ENCODE measurements at regions of chr19 and their contacts with region 1.

Region 1: GRCh38 chr19:6126335-6126974 is 9.0 kb upstream of the ACSBG2 start:
- DNase-seq: no peak
- H3K4me3 ChIP-seq: no peak overlapping the region
- H3K27ac ChIP-seq: no peak overlapping the region
- H3K4me1 ChIP-seq: no peaks in the 10 kb centered on the region
- H3K27me3 ChIP-seq: no peaks in the 10 kb centered on the region
- CTCF ChIP-seq: no peak
- POLR2A ChIP-seq: no peak

Region 2: DNA sequence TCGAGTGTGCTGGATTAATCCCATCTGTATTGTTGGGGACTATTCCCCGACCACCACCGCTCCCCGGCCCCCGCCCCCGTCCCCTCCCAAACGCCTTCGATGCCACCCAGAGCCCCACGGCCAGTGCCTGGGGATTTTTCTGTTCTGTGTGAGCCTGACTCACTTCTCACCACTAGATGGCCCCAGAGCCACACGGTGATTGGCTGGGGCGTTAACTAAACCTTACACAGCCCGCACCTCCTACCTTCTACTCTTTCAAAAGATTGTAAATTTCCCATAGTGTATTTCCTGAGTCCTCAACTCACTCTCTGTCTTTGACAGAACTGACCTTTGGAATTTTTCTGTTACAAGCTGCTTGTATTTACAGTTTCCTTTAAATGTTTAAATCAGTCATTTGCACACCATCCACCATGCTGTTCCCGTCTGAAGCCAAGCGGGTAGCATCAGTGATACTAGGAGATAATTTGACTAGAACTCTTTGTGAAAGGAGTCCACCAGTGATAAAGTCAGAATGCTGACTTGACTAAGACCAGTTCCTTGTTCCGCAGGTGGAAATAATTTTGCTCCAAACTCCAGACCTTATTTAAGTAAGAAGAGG is 77.5 kb before region 1 on chr19:
- intact Hi-C with region 1: loop called (anchors 2 kb)
- DNase-seq: peak in 1 of 2 donors; percentile 70
- H3K4me3 ChIP-seq: no peak overlapping the region
- H3K27ac ChIP-seq: no peak overlapping the region
- H3K4me1 ChIP-seq: peaks cover 10% of the 10 kb centered on the region
- H3K27me3 ChIP-seq: no peaks in the 10 kb centered on the region
- CTCF ChIP-seq: peak; percentile 37 to 64 (median 57)
- POLR2A ChIP-seq: no peak

Measured in vagina (tissue), 2 donors.